ENCODE measurements at regions of chr17 and their contacts with region 1.

Region 1: DNA sequence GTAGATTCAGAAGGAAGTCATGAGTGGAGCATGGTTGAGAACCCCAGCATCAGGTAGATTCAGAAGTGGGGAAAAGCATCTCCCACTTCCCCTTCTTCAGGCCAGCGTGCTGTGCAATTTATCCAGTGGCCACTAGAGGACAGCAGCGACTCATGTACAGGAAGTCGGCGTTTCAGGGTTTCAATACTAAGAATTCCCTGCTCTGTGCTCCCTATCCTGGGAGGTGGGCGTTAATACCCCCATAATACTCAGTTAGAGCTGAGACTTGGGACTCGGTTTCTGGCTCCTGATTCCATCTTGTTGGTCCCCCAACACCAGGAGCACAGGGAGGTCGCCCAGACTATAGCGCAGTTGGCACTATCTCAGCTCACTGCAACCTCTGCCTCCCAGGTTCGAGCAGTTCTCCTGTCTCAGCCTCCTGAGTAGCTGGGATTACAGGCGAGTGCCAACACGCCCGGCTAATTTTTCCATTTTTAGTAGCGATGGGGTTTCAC is 75.3 kb upstream of the AMZ2 start:
- DNase-seq: peak; percentile 40 to 61
- H3K4me3 ChIP-seq: no peak overlapping the region
- H3K27ac ChIP-seq: no peak overlapping the region
- H3K4me1 ChIP-seq: no peaks in the 10 kb centered on the region
- H3K27me3 ChIP-seq: no peaks in the 10 kb centered on the region
- CTCF ChIP-seq: peak; percentile 98

Region 2: DNA sequence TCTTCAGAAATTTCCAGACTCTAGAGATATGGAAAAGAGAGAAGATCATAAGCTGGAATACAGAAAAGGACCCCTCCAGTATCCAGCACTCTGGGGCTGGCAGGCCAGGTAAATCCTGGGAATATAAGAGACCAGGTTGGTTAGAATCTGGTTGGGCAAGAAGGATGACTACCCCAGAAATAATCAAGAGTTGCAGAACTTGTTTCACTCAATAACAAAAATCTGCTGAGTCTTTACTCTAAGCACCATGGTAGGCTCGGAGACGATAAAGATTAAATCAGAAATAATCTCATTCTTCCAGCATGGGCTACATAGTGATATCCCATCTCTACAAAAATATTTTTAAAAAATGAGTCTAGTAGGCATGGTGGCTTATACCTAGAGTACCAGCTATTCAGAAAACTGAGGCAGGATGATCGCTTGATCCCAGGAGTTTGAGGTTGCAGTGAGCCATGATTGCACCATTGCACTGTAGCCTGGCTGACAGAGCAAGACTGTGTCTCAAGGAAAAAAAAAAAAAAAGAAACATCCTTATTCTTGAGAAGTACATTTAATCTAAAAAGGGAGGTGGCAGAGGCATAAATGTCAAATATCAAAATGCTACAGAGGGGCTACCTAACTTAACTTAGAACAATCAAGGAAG is 1764.6 kb after region 1 on chr17:
- CTCF ChIA-PET with region 1: interaction called, 13 read pairs
- POLR2A ChIA-PET with region 1: no interaction called
- intact Hi-C with region 1: no loop called
- DNase-seq: peak in 1 of 2 experiments; percentile 55
- H3K4me3 ChIP-seq: no peak overlapping the region
- H3K27ac ChIP-seq: no peak overlapping the region
- H3K4me1 ChIP-seq: peaks cover 8% of the 10 kb centered on the region
- H3K27me3 ChIP-seq: no peaks in the 10 kb centered on the region
- CTCF ChIP-seq: no peak

Measured in PC-9 (cell line).